ENCODE measurements at regions of chr17 and their contacts with region 1.

Region 1: DNA sequence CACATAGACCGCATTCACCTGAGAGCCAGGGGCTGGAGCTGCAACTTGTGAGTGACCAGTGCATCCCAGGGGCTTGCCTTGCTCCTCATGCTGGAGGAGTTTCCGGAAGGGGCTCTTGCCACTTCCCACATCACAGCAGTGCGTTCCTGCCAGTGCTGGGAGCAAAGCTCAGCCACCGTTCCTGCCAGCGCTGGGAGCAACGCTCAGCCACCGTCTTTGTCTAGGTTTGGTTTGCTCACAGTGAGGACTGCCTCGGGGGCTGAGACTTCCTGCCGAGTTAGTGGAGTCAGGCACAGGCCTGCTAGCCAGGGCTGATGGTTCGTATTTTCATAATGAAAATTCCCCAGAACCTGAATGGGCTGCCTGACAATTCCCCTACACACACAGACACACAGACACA is 5.4 kb upstream of the CHRNE start:
- DNase-seq: peak; percentile 40
- ATAC-seq: peak; percentile 48
- H3K4me3 Mint-ChIP-seq: no peak overlapping the region
- H3K27ac Mint-ChIP-seq: no peak overlapping the region
- H3K4me1 Mint-ChIP-seq: peaks cover 7% of the 10 kb centered on the region
- H3K27me3 Mint-ChIP-seq: peaks cover 11% of the 10 kb centered on the region

Region 2: GRCh38 chr17:4565209-4566141 is 342.8 kb before region 1 on chr17:
- CTCF ChIA-PET with region 1: interaction called, 14 read pairs
- POLR2A ChIA-PET with region 1: no interaction called
- DNase-seq: peak; percentile 75
- ATAC-seq: peak; percentile 84
- H3K4me3 Mint-ChIP-seq: peak overlapping the region; percentile 7
- H3K27ac Mint-ChIP-seq: no peak overlapping the region
- H3K4me1 Mint-ChIP-seq: peaks cover 40% of the 10 kb centered on the region
- H3K27me3 Mint-ChIP-seq: peaks cover 2% of the 10 kb centered on the region

Region 3: GRCh38 chr17:4852567-4853207 is 55.6 kb before region 1 on chr17:
- CTCF ChIA-PET with region 1: no interaction called
- POLR2A ChIA-PET with region 1: no interaction called
- DNase-seq: no peak
- ATAC-seq: no peak
- H3K4me3 Mint-ChIP-seq: peak overlapping the region; percentile 39
- H3K27ac Mint-ChIP-seq: peak overlapping the region; percentile 62
- H3K4me1 Mint-ChIP-seq: peaks cover 11% of the 10 kb centered on the region
- H3K27me3 Mint-ChIP-seq: peaks cover 9% of the 10 kb centered on the region

Region 4: DNA sequence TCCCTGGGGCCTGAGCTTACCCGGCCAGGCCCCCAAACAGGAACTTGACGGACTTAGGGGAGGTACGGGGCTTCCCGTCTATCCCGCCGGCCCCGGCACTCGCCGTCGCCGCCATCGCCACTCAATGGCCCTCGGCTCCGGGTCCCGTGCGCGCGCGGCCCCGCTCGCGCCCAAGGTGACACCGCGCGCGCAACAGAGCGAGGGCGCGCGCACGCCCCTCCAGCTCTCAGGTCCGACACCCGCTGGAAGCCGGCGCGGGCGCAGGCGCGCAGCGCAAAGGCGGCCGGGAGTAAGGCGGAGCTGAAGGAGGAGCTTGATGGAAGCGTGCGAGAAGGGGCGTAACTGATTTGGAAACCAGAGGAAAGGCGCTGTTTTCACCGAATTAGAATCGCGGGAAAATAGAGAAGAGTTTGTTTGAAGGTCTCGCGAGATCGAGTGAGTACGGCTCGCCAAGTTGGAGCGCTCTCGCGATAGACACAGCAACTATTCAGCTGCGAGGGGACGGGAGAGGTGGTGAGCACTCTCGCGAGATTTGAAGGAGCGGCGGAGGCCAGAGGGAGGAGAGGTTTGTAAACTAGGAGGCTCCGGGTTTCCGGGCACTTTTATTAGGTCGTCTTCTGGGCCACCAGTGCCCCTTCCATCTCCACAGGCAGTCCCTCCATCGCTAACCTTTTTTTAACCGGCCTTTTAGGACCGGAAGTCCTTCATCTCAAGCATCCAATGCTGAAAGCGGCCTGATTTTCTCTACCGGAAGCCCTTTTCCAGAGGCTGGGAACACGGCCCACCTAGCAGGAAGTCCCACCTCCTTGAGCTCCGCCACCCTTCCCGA is 31.7 kb after region 1 on chr17 and contains the starts of genes RNF167 and SLC25A11:
- CTCF ChIA-PET with region 1: interaction called, 13 read pairs
- POLR2A ChIA-PET with region 1: interaction called, 10 read pairs
- DNase-seq: peak; percentile 99
- ATAC-seq: peak; percentile 83
- H3K4me3 Mint-ChIP-seq: peak within 1 kb of the TSS; percentile 97
- H3K27ac Mint-ChIP-seq: peak within 1 kb of the TSS; percentile 88
- H3K4me1 Mint-ChIP-seq: peaks cover 67% of the 10 kb centered on the region
- H3K27me3 Mint-ChIP-seq: no peaks in the 10 kb centered on the region
- total RNA-seq, gene RNF167: 239 to 245 TPM
- total RNA-seq, gene SLC25A11: 78.5 to 86.4 TPM

Region 5: GRCh38 chr17:4948931-4949320 is 40.6 kb after region 1 on chr17:
- CTCF ChIA-PET with region 1: interaction called, 9 read pairs
- POLR2A ChIA-PET with region 1: interaction called, 10 read pairs
- DNase-seq: peak; percentile 84
- ATAC-seq: peak; percentile 46
- H3K4me3 Mint-ChIP-seq: peak overlapping the region; percentile 97
- H3K27ac Mint-ChIP-seq: peak overlapping the region; percentile 99
- H3K4me1 Mint-ChIP-seq: peaks cover 39% of the 10 kb centered on the region
- H3K27me3 Mint-ChIP-seq: no peaks in the 10 kb centered on the region

Region 6: DNA sequence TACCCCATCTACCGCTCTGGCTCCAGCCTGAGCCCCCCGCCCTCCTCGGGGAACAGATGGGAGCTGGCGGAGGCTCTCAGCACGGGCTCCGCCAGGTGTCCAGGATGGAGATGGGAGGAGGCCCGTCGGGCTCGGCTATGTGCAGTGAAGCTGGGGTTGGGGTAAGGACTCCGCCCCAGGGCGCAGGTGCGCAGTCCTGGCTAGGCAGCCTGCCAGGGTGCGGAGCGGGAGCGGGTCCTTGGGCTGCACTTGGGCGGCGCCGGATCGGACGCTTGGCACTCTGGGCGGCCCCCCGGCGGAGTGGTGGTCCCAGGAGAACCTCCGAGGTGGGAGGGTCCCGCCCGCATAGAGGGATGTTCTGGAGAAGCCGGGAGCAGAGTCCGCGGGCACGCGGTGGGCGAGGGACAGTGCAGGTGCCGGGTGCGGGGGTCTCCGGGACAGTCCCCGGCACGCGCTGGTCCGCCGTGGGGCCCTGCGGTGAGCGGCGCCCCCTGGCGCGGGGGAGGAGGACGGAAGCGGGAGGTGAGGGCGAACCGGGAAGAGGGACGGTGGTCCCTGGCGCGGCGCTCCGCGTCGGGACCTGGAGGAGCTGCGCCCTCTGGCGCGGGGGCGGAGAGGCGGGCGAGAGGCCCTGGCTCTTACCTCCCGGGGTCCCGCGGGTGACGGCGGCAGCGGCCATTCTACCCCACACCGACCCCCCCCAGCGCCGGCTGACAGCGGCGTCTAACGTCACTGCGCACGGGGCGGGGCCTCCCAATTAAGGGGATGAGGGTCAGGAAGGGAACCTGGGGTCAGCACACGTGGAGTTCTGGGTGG is 78.9 kb after region 1 on chr17 and contains the start of gene CAMTA2:
- CTCF ChIA-PET with region 1: interaction called, 22 read pairs
- POLR2A ChIA-PET with region 1: no interaction called
- DNase-seq: peak; percentile 91
- ATAC-seq: peak; percentile 89
- H3K4me3 Mint-ChIP-seq: peak within 1 kb of the TSS; percentile 88
- H3K27ac Mint-ChIP-seq: peak within 1 kb of the TSS; percentile 92
- H3K4me1 Mint-ChIP-seq: peaks cover 41% of the 10 kb centered on the region
- H3K27me3 Mint-ChIP-seq: no peaks in the 10 kb centered on the region
- total RNA-seq, gene CAMTA2: 51.3 to 55.5 TPM

Region 7: GRCh38 chr17:5003214-5003867 is 95.0 kb after region 1 on chr17:
- CTCF ChIA-PET with region 1: no interaction called
- POLR2A ChIA-PET with region 1: no interaction called
- DNase-seq: no peak
- ATAC-seq: no peak
- H3K4me3 Mint-ChIP-seq: no peak overlapping the region
- H3K27ac Mint-ChIP-seq: no peak overlapping the region
- H3K4me1 Mint-ChIP-seq: peaks cover 14% of the 10 kb centered on the region
- H3K27me3 Mint-ChIP-seq: no peaks in the 10 kb centered on the region

Region 8: GRCh38 chr17:5042157-5043022 is 134.1 kb after region 1 on chr17:
- CTCF ChIA-PET with region 1: no interaction called
- POLR2A ChIA-PET with region 1: no interaction called
- DNase-seq: peak; percentile 62
- ATAC-seq: peak; percentile 75
- H3K4me3 Mint-ChIP-seq: peak overlapping the region; percentile 93
- H3K27ac Mint-ChIP-seq: peak overlapping the region; percentile 98
- H3K4me1 Mint-ChIP-seq: peaks cover 48% of the 10 kb centered on the region
- H3K27me3 Mint-ChIP-seq: no peaks in the 10 kb centered on the region